ENCODE measurements at regions of chr14 and their contacts with region 1.

Region 1: DNA sequence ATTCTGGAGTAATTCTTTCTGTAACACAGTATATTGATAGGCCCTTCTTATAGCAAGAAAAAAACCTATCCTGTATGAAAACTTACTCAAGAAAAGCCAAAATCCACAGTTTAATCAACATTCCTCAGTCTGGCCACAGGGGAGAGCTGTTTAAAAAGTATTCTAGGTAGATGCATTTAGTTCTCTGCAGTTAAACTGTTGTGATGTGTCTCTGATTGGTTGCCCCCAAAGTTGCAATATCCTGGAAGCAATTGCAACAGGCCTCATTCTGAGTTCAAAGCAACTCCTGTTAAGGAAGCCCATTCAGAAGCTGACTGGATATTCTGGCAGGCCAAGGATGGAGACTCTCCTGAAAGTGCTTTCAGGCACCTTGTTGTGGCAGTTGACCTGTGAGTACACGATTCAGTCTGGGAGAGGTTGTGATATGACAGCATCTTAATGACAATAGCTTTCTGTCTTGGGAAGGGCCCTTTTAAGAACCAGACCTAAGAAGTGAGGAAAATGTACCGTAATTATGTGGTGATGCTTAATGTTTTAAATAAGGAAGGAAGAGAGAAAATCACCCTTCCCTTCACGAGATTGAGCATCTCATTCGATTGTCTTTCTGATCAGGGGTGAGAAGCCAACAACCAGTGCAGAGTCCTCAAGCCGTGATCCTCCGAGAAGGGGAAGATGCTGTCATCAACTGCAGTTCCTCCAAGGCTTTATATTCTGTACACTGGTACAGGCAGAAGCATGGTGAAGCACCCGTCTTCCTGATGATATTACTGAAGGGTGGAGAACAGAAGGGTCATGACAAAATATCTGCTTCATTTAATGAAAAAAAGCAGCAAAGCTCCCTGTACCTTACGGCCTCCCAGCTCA is 420.7 kb downstream of the DAD1 start:
- DNase-seq: no peak
- H3K4me3 Mint-ChIP-seq: peak overlapping the region; percentile 81
- H3K27ac Mint-ChIP-seq: peak overlapping the region; percentile 65
- H3K4me1 Mint-ChIP-seq: peaks cover 3% of the 10 kb centered on the region
- H3K27me3 Mint-ChIP-seq: no peaks in the 10 kb centered on the region

Region 2: GRCh38 chr14:22200977-22201605 is 32.8 kb after region 1 on chr14:
- intact Hi-C with region 1: loop called (anchors 5 kb)
- DNase-seq: no peak
- H3K4me3 Mint-ChIP-seq: no peak overlapping the region
- H3K27ac Mint-ChIP-seq: peak overlapping the region; percentile 44
- H3K4me1 Mint-ChIP-seq: peaks cover 6% of the 10 kb centered on the region
- H3K27me3 Mint-ChIP-seq: no peaks in the 10 kb centered on the region